ENCODE measurements at regions of chr7 and their contacts with region 1.

Region 1: GRCh38 chr7:101017064-101017777 is 2.7 kb upstream of the MUC17 start:
- DNase-seq: peak; percentile 78
- H3K4me3 ChIP-seq: peak overlapping the region; percentile 8 to 45 (median 25)
- H3K27ac ChIP-seq: peak overlapping the region; percentile 50
- H3K4me1 ChIP-seq: peaks cover 18% of the 10 kb centered on the region
- H3K27me3 ChIP-seq: no peaks in the 10 kb centered on the region
- CTCF ChIP-seq: no peak

Region 2: DNA sequence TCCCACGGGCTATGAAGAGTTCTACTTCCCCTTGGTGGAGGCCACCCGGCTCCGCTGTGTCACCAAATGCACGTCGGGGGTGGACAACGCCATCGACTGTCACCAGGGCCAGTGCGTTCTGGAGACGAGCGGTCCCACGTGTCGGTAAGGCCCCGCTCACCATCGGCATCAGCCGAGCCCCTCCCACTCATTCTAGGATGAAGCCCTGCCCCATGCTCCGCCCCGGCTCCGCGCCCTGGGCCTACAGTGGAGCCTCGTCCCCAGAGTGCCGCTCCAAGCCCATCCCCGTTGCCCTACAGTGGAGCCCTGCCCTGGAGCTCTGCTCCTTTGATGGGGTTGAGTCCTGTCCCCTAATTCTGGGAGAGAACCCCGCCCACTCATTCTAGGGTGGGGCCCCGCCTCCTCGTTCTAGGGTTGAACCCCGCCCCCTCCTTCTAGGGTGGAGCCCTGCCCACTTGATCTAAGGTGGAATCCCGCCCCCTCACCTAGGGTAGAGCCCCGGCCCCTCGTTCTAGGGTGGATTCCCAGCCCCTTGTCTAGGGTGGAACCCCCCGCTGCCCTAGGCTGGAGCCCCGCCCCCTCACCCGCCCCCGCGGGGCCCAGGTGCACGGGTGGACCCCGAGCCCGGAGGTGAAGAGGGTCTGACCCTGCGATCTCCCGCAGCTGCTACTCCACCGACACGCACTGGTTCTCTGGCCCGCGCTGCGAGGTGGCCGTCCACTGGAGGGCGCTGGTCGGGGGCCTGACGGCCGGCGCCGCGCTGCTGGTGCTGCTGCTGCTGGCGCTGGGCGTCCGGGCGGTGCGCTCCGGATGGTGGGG is 51.3 kb before region 1 on chr7:
- CTCF ChIA-PET with region 1: no interaction called
- dilution Hi-C with region 1: no loop called
- in situ Hi-C with region 1: no loop called
- intact Hi-C with region 1: loop called (anchors 5 kb)
- DNase-seq: peak; percentile 74
- H3K4me3 ChIP-seq: peak overlapping the region in 2 of 3 experiments; percentile 23 to 34
- H3K27ac ChIP-seq: no peak overlapping the region
- H3K4me1 ChIP-seq: peaks cover 7% of the 10 kb centered on the region
- H3K27me3 ChIP-seq: peaks cover 17% of the 10 kb centered on the region
- CTCF ChIP-seq: peak; percentile 82 to 86

Region 3: DNA sequence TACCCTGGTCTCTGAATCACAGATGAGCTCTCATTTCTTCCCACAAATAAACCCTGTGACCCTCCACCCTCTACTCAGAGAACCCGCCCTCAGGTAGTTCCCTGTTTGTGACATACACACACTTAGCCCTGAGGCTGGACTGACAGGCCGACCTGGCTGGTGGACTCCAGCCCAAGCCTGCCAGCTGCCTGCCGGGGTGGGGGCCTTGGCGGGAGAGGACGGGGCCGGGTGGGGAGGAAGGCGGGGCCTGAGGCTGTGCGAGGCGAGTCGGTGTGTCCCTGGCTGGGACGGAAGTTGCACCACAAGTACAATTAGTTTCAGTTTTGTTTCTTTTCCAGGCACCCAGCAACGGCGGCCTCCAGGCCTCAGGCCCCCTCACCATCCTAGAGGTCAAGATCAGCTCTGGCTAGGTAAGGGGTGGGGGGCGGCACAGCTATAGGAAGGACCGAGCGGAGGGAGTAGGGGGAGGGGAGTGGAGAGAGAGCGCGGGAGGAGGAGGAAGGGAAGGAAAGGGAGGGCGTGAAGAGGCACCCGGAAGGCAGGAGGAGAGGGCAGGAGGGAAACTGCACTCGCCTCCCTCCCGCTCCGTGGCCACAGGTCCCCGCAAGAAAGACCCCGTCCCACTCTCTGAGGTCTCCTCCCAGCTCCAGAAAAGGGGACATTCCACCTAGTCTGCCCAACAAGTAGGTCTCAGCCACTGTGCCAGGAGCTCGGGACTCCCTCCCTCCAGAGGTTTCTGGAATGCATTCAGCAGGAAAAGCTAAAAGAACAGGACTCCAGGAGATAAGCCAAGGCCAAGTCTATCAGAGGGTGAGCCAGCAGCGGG is 68.2 kb after region 1 on chr7 and contains the start of gene TRIM56:
- CTCF ChIA-PET with region 1: no interaction called
- dilution Hi-C with region 1: loop called (anchors 5 kb)
- in situ Hi-C with region 1: no loop called
- intact Hi-C with region 1: no loop called
- DNase-seq: peak; percentile 100
- H3K4me3 ChIP-seq: peak within 1 kb of the TSS; percentile 60 to 87 (median 66)
- H3K27ac ChIP-seq: peak within 1 kb of the TSS; percentile 91
- H3K4me1 ChIP-seq: peaks cover 22% of the 10 kb centered on the region
- H3K27me3 ChIP-seq: no peaks in the 10 kb centered on the region
- CTCF ChIP-seq: no peak
- total RNA-seq, gene TRIM56: 16.3 to 30.8 TPM

Measured in mammary epithelial cell (primary cell).